PC-3 (cell line): ENCODE measurements at regions of chr17 and their contacts with region 1.

Region 1: DNA sequence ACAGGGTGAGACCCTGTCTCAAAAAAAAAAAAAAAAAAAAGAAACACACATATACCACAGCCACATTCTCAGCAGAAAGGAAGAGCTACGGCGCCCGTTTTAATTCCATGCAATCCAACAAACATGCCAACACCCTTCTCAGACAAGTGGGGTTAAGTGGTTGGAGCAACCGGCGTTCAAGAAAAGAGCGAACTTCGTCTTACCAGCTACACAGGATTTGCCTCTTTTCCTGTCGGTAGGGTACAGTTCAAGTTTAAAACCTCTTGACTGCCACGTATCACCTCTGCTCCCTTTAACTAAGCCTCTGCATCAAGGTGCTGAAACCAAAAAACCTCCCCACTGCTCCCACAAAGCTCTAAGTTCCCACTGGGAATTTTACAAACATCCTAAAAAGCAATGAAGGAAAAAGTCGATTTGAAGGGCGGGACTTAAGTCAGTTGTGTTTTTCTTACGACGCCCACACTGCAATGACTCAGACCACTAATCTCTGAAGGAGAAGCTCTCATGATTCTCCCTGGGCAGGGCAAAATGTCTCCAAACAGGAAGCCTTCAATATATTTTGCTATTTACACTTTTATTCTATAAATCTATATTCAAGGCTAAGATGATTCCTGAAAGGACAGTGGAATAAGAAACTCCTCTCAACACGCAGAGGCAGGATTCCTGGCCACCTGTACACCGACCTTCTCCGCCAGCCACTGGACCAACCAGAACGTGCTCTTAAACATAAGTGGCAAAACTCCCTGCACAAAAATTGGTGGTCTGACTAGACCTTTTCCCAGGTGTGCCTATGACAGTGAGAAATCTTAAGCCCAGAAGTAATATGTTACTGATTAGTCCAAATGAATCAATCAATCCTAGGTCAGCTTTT is 18.8 kb downstream of the SRP68 start:
- DNase-seq: peak; percentile 75
- ATAC-seq: peak; percentile 51
- H3K4me3 ChIP-seq: peak overlapping the region; percentile 37
- H3K27ac ChIP-seq: peak overlapping the region; percentile 83
- H3K4me1 ChIP-seq: peaks cover 38% of the 10 kb centered on the region
- H3K27me3 ChIP-seq: no peaks in the 10 kb centered on the region
- CTCF ChIP-seq: no peak

Region 2: GRCh38 chr17:76103274-76104139 is 50.0 kb after region 1 on chr17 and contains the start of gene EXOC7:
- CTCF ChIA-PET with region 1: no interaction called
- POLR2A ChIA-PET with region 1: interaction called, 31 read pairs
- intact Hi-C with region 1: no loop called
- DNase-seq: peak; percentile 98
- ATAC-seq: peak; percentile 82
- H3K4me3 ChIP-seq: peak within 1 kb of the TSS; percentile 95
- H3K27ac ChIP-seq: peak within 1 kb of the TSS; percentile 16
- H3K4me1 ChIP-seq: peaks cover 15% of the 10 kb centered on the region
- H3K27me3 ChIP-seq: no peaks in the 10 kb centered on the region
- CTCF ChIP-seq: no peak
- total RNA-seq, gene EXOC7: 153 and 173 TPM in 2 replicates